H1 (cell line): ENCODE measurements at regions of chr18 and their contacts with region 1.

Region 1: DNA sequence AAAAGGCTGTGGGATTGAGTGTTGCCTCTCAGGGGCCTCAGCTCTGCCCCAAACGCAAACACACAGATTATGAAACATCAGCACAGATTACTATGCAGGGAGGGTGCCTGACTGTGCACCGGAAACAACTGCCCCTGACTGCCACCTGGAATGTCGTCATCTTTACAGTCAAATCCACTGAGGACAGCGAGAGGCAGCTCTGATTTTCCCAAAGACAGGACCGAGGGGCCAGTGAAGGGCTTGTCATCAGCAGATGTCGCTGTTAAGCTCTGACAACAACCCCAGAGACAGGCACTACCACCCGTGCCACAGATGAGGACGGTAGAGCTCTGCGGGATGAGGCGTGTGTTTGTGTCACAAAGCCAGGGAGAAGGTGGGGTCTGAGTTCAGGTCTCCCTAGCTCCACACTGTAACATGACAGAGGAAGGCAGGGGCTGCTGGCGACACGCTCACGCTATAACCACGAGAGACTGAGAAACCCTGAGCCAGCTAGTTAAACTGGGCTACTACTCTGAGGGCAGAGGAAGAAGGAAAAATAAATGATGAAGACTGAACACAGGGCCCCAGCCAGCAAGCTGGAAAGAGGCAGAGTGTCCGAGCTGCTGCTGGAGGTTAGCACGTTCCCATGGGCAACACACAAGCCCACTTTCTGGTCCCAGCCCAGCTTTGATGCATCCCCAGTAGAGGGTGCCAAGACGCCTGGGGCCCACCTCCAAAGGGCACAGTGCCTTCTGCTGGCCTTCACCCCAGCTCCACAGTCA is 47.0 kb downstream of the PARD6G start:
- DNase-seq: peak in 1 of 2 experiments; percentile 54
- H3K4me3 ChIP-seq: no peak overlapping the region
- H3K27ac ChIP-seq: no peak overlapping the region
- H3K4me1 ChIP-seq: peaks cover 2 to 25% (median 7%) of the 10 kb centered on the region in 4 experiments; a peak in 6 of 7 replicates
- H3K27me3 ChIP-seq: no peaks in the 10 kb centered on the region
- CTCF ChIP-seq: peak; percentile 43 to 63 (median 59)
- EP300 ChIP-seq: no peak
- POLR2A ChIP-seq: no peak
- RAD21 ChIP-seq: peak; percentile 58 to 70

Region 2: DNA sequence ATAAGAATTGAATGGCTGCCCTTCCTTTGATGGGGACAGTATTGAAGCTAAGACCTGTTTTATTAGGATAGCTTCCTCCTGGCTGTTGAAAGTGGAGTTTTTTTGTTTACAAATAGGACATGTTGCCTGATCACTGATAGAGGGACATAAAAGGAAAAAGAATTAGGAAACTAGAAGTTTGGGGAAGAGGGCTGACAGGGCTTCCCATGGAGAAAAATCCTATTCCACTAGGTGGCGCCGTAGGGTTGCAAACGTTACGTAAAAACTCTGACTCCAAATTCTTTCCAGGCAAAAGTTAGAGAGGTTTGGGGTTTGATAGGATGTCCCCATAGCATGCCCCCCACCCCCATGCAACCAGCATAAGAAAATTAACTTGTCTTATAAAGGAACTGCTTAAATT is 177.2 kb before region 1 on chr18:
- CTCF ChIA-PET with region 1: no interaction called
- POLR2A ChIA-PET with region 1: no interaction called
- DNase-seq: peak in 1 of 2 experiments; percentile 80
- H3K4me3 ChIP-seq: peak overlapping the region in 1 of 4 experiments; percentile 13; a peak in 1 of 8 replicates
- H3K27ac ChIP-seq: no peak overlapping the region
- H3K4me1 ChIP-seq: no peaks in the 10 kb centered on the region
- H3K27me3 ChIP-seq: no peaks in the 10 kb centered on the region
- CTCF ChIP-seq: peak; percentile 27 to 60 (median 57)
- EP300 ChIP-seq: no peak
- POLR2A ChIP-seq: no peak
- RAD21 ChIP-seq: peak; percentile 75 to 81

Region 3: DNA sequence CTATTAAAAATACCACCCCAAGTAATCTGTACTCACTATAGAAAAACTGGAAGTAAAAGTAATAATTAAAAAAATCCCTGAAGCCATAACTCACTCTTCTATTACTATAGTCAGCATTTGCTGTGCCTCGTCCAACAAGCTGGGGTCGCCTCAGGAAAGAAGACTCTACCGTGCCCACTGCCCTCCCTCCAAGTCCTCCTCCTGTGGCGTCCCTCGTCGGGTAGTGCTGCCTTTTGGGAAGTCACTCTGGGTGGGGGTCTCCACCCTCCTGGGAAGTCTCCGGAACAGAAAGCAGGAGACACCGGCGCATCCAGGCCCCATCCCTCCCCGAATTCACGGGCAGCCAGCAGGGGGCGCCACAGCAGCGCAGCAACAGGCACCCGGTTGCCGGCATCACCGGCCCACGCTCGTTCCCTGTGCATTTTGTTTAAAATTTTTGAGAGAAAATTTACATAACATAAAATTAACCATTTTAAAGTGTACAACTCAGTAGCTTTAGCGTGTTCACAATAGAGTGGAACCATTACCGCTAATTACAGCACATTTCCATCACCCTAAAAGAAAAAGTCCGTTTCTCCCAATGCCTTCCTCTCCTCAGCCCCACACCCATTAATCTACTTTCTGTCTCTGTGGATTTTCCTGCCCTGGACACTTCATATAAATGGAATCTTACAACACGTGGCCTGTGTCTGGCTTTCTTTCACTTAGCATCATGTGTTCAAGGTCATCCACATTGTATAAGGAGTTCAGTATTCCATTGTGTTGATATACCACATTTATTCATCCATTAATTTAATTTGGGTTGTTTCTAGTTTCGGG is 29.1 kb before region 1 on chr18:
- CTCF ChIA-PET with region 1: interaction called, 19 read pairs
- POLR2A ChIA-PET with region 1: no interaction called
- DNase-seq: peak in 1 of 2 experiments; percentile 96
- H3K4me3 ChIP-seq: no peak overlapping the region
- H3K27ac ChIP-seq: no peak overlapping the region
- H3K4me1 ChIP-seq: no peaks in the 10 kb centered on the region
- H3K27me3 ChIP-seq: no peaks in the 10 kb centered on the region
- CTCF ChIP-seq: peak; percentile 85 to 97 (median 93)
- EP300 ChIP-seq: no peak
- POLR2A ChIP-seq: no peak
- RAD21 ChIP-seq: peak; percentile 90

Region 4: GRCh38 chr18:80210312-80211083 is 10.1 kb after region 1 on chr18:
- CTCF ChIA-PET with region 1: interaction called, 17 read pairs
- POLR2A ChIA-PET with region 1: interaction called, 3 read pairs
- DNase-seq: peak in 1 of 2 experiments; percentile 34
- H3K4me3 ChIP-seq: no peak overlapping the region
- H3K27ac ChIP-seq: no peak overlapping the region
- H3K4me1 ChIP-seq: no peaks in the 10 kb centered on the region
- H3K27me3 ChIP-seq: no peaks in the 10 kb centered on the region
- CTCF ChIP-seq: no peak
- EP300 ChIP-seq: no peak
- POLR2A ChIP-seq: no peak
- RAD21 ChIP-seq: no peak

Region 5: DNA sequence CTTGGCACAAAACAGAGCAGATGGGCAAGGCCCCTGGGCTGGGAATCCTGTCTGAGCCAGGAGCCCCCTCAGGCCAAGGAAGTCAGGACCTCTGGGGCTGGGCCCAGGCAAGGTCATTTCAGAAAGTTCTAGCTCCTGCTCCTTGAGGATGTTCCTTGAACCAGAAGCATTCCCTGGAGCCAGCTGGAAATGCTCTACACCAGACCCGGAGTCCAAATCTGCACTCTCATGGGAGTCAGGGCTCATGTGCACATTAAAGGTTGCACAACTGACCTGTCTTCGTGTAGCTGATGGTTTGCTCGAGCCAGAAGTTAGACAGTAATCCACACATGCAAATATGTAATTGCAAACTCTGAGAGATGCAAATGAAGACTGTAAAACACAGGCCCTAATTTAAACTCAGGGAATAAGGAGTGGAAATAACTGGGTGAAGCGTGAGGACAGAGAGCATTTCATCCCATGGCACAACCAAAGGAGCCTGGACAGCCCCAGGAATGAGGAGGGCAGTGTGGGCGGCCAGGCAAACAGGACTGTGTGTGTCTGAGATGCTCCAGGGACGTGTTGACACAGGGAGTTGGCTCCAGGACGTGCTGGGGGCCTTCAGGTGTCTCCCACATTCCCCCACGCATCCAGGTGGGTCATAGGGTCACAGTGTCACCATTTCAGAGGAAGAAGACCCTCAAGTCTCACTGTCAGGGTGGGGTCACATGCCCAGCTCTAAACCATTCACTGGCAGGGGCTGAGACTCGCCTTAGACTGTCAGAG is 29.2 kb after region 1 on chr18:
- CTCF ChIA-PET with region 1: interaction called, 14 read pairs
- POLR2A ChIA-PET with region 1: no interaction called
- DNase-seq: peak in 1 of 2 experiments; percentile 36
- H3K4me3 ChIP-seq: no peak overlapping the region
- H3K27ac ChIP-seq: no peak overlapping the region
- H3K4me1 ChIP-seq: peaks cover 0 to 6% (median 2%) of the 10 kb centered on the region in 4 experiments; a peak in 6 of 7 replicates
- H3K27me3 ChIP-seq: no peaks in the 10 kb centered on the region
- CTCF ChIP-seq: no peak
- EP300 ChIP-seq: no peak
- POLR2A ChIP-seq: no peak
- RAD21 ChIP-seq: no peak

Region 6: DNA sequence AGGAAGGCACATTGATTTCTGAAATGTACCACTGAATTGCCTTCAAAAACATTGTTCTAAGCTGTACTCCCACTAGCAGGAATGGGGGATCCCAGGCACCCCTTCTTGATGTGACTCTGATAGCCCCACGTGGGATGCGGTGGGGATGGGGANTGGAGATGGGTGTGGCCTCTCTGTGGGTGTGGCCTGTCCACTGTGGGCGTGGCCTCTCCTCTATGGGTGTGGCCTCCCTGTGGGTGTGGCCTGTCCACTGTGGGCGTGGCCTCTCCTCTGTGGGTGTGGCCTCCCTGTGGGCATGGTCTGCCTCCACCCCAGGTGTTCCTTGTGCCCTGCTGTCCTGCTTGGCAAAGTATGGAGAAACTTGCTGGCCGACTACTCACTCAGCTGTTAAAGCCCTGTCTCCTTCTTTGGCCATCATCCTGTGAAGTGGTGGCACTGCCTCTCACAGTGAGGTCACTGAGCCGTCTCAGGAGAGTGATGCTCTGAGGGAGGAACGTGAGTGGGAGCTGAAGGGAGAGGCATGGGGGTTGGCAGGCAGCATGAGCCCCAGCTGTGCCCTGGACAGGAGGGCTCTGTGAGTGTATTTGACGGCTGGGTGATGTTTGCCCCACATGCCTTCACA is 53.6 kb after region 1 on chr18:
- CTCF ChIA-PET with region 1: interaction called, 42 read pairs
- POLR2A ChIA-PET with region 1: no interaction called
- DNase-seq: peak in 1 of 2 experiments; percentile 72
- H3K4me3 ChIP-seq: no peak overlapping the region
- H3K27ac ChIP-seq: no peak overlapping the region
- H3K4me1 ChIP-seq: no peaks in the 10 kb centered on the region
- H3K27me3 ChIP-seq: no peaks in the 10 kb centered on the region; a peak in 1 of 7 replicates
- CTCF ChIP-seq: no peak
- EP300 ChIP-seq: no peak
- POLR2A ChIP-seq: no peak
- RAD21 ChIP-seq: no peak